Activated naive CD8-positive, alpha-beta T cell treated with anti-CD3 and anti-CD28 coated beads, Interleukin-2, amount 10 ng/mL, durations not matched to agents 7 days and 5 days (primary cell): ENCODE measurements at regions of chr2 and their contacts with region 1.

Region 1: GRCh38 chr2:9555297-9556141 is at the start of gene ADAM17:
- DNase-seq: peak; percentile 95
- ATAC-seq: peak; percentile 92
- H3K4me3 Mint-ChIP-seq: peak within 1 kb of the TSS; percentile 97
- H3K27ac Mint-ChIP-seq: peak within 1 kb of the TSS; percentile 94
- H3K4me1 Mint-ChIP-seq: peaks cover 41% of the 10 kb centered on the region
- H3K27me3 Mint-ChIP-seq: no peaks in the 10 kb centered on the region
- total RNA-seq, gene ADAM17: 24.7 to 25.3 TPM

Region 2: DNA sequence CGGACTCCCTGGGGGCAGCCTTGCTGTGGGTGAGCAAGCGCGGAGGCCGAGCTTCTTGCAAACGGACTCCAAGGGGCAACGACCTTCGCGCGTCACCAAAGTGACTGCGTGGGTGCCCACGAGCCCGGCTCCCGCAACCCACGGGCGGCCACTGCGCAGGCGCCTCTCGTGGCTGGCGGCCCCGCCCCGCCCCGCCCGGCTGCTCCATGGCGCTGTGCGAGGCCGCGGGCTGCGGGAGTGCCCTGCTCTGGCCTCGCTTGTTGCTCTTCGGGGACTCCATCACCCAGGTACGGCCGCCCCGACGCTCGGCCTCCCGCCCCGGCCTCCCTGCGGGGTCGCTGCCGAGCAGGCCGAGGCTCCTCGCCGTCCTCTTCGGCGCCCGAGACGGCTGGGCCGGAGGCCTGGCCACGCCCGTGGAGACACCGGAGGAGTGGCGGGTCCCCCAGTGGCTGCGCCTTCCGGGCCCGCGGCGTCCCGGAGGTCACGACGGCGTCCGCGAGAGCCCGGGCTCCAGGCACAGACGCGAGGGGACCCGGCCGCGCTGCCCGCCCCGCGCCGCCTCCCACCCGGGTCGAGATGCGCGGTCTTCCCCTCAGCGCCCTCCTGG is 81.1 kb before region 1 on chr2 and contains the start of gene IAH1:
- POLR2A ChIA-PET with region 1: interaction called, 28 read pairs
- DNase-seq: peak; percentile 84
- ATAC-seq: peak; percentile 85
- H3K4me3 Mint-ChIP-seq: peak within 1 kb of the TSS; percentile 80
- H3K27ac Mint-ChIP-seq: peak within 1 kb of the TSS; percentile 86
- H3K4me1 Mint-ChIP-seq: peaks cover 28% of the 10 kb centered on the region
- H3K27me3 Mint-ChIP-seq: no peaks in the 10 kb centered on the region
- total RNA-seq, gene IAH1: 73.6 to 73.9 TPM

Region 3: GRCh38 chr2:9532421-9532820 is 23.1 kb before region 1 on chr2:
- POLR2A ChIA-PET with region 1: interaction called, 11 read pairs
- DNase-seq: no peak
- ATAC-seq: no peak
- H3K4me3 Mint-ChIP-seq: no peak overlapping the region
- H3K27ac Mint-ChIP-seq: no peak overlapping the region
- H3K4me1 Mint-ChIP-seq: peaks cover 13% of the 10 kb centered on the region
- H3K27me3 Mint-ChIP-seq: no peaks in the 10 kb centered on the region

Region 4: GRCh38 chr2:9618410-9618809 is 62.9 kb after region 1 on chr2:
- POLR2A ChIA-PET with region 1: interaction called, 19 read pairs
- DNase-seq: no peak
- ATAC-seq: peak; percentile 100
- H3K4me3 Mint-ChIP-seq: peak overlapping the region; percentile 76
- H3K27ac Mint-ChIP-seq: peak overlapping the region; percentile 81
- H3K4me1 Mint-ChIP-seq: peaks cover 63% of the 10 kb centered on the region
- H3K27me3 Mint-ChIP-seq: no peaks in the 10 kb centered on the region

Region 5: GRCh38 chr2:9693211-9693520 is 137.6 kb after region 1 on chr2:
- POLR2A ChIA-PET with region 1: no interaction called
- DNase-seq: no peak
- ATAC-seq: no peak
- H3K4me3 Mint-ChIP-seq: no peak overlapping the region
- H3K27ac Mint-ChIP-seq: no peak overlapping the region
- H3K4me1 Mint-ChIP-seq: peaks cover 12% of the 10 kb centered on the region
- H3K27me3 Mint-ChIP-seq: peaks cover 9% of the 10 kb centered on the region

Region 6: GRCh38 chr2:9843229-9844035 is 287.9 kb after region 1 on chr2 and contains the start of gene TAF1B:
- POLR2A ChIA-PET with region 1: interaction called, 11 read pairs
- DNase-seq: peak; percentile 90
- ATAC-seq: peak; percentile 88
- H3K4me3 Mint-ChIP-seq: peak within 1 kb of the TSS; percentile 88
- H3K27ac Mint-ChIP-seq: peak within 1 kb of the TSS; percentile 88
- H3K4me1 Mint-ChIP-seq: peaks cover 23% of the 10 kb centered on the region
- H3K27me3 Mint-ChIP-seq: no peaks in the 10 kb centered on the region
- total RNA-seq, gene TAF1B: 18.8 to 19.0 TPM